ENCODE measurements at regions of chr1 and their contacts with region 1.

Region 1: DNA sequence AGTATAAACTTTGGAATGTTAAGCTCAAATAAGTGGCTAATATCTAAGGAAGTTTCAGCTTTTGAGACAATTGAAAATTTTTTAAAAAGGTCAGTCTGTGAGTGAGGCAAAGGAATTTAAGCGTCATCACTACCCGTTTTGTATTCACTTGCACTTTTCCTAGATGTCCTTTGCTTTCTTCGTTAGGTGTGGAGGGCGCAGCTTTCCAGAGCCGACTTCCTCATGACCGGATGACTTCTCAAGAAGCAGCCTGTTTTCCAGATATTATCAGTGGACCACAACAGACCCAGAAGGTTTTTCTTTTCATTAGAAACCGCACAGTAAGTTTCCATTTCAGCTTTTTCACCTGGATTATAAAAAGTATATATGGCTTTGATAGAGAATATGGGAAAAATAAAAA is 30.9 kb downstream of the KDM1A start:
- DNase-seq: no peak
- H3K4me3 ChIP-seq: no peak overlapping the region
- H3K27ac ChIP-seq: peak overlapping the region in 1 of 2 experiments; percentile 14
- H3K4me1 ChIP-seq: no peaks in the 10 kb centered on the region
- H3K27me3 ChIP-seq: no peaks in the 10 kb centered on the region

Region 2: DNA sequence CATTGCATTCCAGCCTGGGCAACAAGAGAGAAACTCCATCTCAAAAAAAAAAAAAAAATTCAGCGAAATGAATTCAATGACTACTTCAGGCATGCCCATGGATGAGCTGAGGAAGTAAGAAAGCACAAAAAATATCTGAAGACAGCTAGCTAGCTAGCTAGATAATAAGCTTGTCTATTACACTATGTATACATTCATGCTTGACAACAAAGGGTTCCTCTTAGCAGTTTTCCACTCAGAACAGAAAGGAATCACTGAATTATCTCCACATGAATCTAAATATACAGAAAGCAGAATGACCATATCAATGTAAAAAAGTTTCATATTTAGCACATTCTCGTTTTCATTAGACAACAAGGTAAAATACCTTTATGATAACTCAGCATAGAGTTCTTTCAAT is 1299.4 kb before region 1 on chr1:
- CTCF ChIA-PET with region 1: no interaction called
- POLR2A ChIA-PET with region 1: interaction called, 10 read pairs
- DNase-seq: no peak
- H3K4me3 ChIP-seq: no peak overlapping the region
- H3K27ac ChIP-seq: no peak overlapping the region
- H3K4me1 ChIP-seq: no peaks in the 10 kb centered on the region
- H3K27me3 ChIP-seq: no peaks in the 10 kb centered on the region